Uterus (tissue), 4 donors: ENCODE measurements at regions of chr1 and their contacts with region 1.

Region 1: GRCh38 chr1:203340112-203340804 is 10.7 kb downstream of the FMOD start:
- DNase-seq: peak; percentile 73 to 82
- H3K4me3 ChIP-seq: no peak overlapping the region
- H3K27ac ChIP-seq: peak overlapping the region; percentile 40 to 68
- H3K4me1 ChIP-seq: no peaks in the 10 kb centered on the region
- H3K27me3 ChIP-seq: no peaks in the 10 kb centered on the region
- CTCF ChIP-seq: peak; percentile 82 to 93 (median 89)
- POLR2A ChIP-seq: no peak

Region 2: DNA sequence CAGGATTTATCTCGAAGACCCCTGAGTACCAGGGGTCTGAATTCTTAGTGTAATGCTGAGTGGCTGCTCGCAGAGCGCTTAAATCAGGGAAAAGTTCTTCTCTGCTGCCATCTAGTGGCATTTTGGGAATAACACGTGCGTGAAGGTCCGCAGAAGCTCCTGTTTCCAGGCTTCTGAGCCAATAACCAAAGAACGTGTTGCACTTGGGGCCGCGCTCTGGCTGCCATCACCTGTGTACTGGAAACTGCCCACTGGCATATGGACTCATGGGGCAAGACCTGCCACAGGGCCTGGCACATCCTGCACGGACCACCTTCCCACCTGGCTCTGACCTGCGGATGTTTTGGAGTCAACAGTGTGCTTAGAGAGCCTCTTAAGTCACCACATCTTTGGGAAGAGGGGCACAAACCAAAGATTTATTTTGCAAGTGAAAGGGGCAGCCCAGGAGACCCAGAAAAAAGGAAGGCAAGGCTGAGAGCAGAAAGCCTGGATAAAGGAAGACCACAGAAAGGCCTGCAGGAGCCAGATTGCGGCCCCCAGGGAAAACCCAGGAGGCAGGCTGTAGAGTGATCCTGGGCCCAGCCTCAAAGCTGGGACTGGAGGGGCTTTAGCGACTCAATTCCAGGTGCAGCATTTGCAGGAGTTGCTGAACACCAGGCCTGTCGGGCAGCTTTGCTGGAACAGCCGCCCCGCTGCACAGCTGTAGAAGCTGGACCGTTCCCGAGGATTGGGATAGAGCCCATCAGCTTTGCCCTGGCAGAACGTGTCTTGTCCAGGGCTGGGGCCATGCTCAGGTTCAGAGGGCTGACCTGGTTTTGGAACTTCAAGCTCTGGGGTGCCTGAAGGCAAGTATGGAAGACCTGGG is 123.8 kb before region 1 on chr1:
- intact Hi-C with region 1: no loop called
- DNase-seq: peak; percentile 63 to 64
- H3K4me3 ChIP-seq: no peak overlapping the region
- H3K27ac ChIP-seq: no peak overlapping the region
- H3K4me1 ChIP-seq: no peaks in the 10 kb centered on the region
- H3K27me3 ChIP-seq: no peaks in the 10 kb centered on the region
- CTCF ChIP-seq: peak; percentile 72 to 89 (median 80)
- POLR2A ChIP-seq: no peak

Region 3: GRCh38 chr1:203299169-203299568 is 41.1 kb before region 1 on chr1:
- intact Hi-C with region 1: no loop called
- DNase-seq: no peak
- H3K4me3 ChIP-seq: no peak overlapping the region
- H3K27ac ChIP-seq: no peak overlapping the region
- H3K4me1 ChIP-seq: no peaks in the 10 kb centered on the region
- H3K27me3 ChIP-seq: no peaks in the 10 kb centered on the region
- CTCF ChIP-seq: no peak
- POLR2A ChIP-seq: no peak

Region 4: DNA sequence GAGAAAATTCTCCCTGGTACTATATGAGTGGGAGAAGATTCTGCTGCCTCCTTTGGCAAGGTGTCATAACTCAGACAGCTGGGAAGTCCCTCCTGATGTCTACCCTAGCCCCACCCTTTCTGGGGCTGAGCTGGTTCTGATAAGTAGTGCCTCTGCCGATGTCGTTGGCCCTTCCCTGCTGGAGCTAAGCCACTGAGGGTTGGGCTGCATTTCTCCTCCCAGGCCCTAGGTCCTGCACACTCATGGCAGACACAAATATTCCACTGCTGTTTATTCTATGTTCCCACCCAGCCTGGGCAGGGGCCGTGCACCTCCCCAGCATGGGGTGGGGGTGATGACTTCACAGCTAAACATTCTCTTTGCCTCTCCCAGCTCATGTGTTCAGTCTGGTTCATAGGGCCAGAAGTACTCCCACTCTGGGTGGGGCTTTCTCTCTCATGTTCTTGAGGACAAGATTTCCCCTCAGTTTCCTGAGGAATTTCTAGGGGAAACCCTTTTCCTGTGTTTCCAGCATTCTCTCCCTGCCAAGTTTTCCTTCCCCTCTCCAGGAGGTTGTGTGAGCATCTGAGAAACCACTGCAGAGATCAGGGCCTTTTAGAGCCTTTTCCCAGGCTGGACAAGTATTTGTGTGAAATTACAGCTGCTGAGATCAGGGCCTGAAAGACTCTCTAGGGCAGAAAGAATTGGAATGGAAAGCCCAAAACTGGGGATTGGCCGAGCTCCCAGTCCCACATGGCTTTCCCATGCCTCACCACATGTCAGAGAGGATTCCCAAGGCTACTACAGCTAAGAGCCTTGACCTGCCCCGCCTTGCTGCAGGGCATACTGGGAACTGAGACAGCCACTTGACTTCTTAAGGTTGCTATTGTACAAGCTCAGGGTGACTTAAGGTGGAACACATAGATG is 352.6 kb after region 1 on chr1:
- intact Hi-C with region 1: loop called (anchors 10 kb)
- DNase-seq: peak; percentile 90 to 92
- H3K4me3 ChIP-seq: no peak overlapping the region
- H3K27ac ChIP-seq: peak overlapping the region; percentile 92 to 97
- H3K4me1 ChIP-seq: peaks cover 20 to 39% of the 10 kb centered on the region in 2 donors
- H3K27me3 ChIP-seq: no peaks in the 10 kb centered on the region
- CTCF ChIP-seq: peak in 2 of 4 experiments; percentile 28 to 32
- POLR2A ChIP-seq: peak in 1 of 2 donors; percentile 39